Activated naive CD4-positive, alpha-beta T cell treated with anti-CD3 and anti-CD28 coated beads, Interleukin-2, amount 10 ng/mL, durations not matched to agents 7 days and 5 days (primary cell): ENCODE measurements at regions of chr5 and their contacts with region 1.

Region 1: DNA sequence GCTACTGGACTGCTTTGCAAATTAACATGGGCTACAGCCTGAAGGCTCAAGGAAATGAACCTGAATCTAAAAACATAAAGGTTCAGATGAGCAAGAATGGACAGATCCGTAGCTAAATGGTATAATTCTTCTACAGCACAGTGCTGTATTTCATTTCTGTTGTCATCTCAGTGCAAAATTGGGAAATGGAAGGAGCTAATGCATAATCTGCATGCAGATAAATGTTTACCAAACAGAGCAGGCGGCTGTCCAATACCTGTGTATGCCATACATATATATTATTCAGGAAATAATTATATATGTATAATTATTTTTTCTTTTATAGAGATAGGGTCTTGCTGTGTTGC is 4.3 kb upstream of the HSPA9 start:
- DNase-seq: no peak
- H3K4me3 Mint-ChIP-seq: no peak overlapping the region
- H3K27ac Mint-ChIP-seq: no peak overlapping the region
- H3K4me1 Mint-ChIP-seq: peaks cover 21% of the 10 kb centered on the region
- H3K27me3 Mint-ChIP-seq: peaks cover 16% of the 10 kb centered on the region

Region 2: GRCh38 chr5:138559937-138560336 is 19.6 kb before region 1 on chr5:
- CTCF ChIA-PET with region 1: no interaction called
- DNase-seq: no peak
- H3K4me3 Mint-ChIP-seq: no peak overlapping the region
- H3K27ac Mint-ChIP-seq: no peak overlapping the region
- H3K4me1 Mint-ChIP-seq: peaks cover 16% of the 10 kb centered on the region
- H3K27me3 Mint-ChIP-seq: no peaks in the 10 kb centered on the region

Region 3: GRCh38 chr5:139262742-139263445 is 683.4 kb after region 1 on chr5:
- CTCF ChIA-PET with region 1: interaction called, 17 read pairs
- DNase-seq: peak; percentile 81
- H3K4me3 Mint-ChIP-seq: no peak overlapping the region
- H3K27ac Mint-ChIP-seq: no peak overlapping the region
- H3K4me1 Mint-ChIP-seq: peaks cover 2% of the 10 kb centered on the region
- H3K27me3 Mint-ChIP-seq: peaks cover 46% of the 10 kb centered on the region